ENCODE measurements at regions of chr16 and their contacts with region 1.

Region 1: GRCh38 chr16:70380861-70381603 is 34.3 kb downstream of the DDX19A start:
- DNase-seq: peak; percentile 97 to 98 (median 97)
- ATAC-seq: peak; percentile 96 to 98 (median 97)
- H3K4me3 ChIP-seq: peak overlapping the region; percentile 41 to 88 (median 68)
- H3K27ac ChIP-seq: peak overlapping the region; percentile 36 to 92 (median 84)
- H3K4me1 ChIP-seq: peaks cover 0 to 27% (median 15%) of the 10 kb centered on the region in 12 donors
- H3K27me3 ChIP-seq: no peaks in the 10 kb centered on the region
- CTCF ChIP-seq: peak in 10 of 12 donors; percentile 24 to 52 (median 36)
- POLR2A ChIP-seq: peak in 1 of 2 donors; percentile 71

Region 2: GRCh38 chr16:69166221-69166833 is 1214.7 kb before region 1 on chr16:
- intact Hi-C with region 1: no loop called
- DNase-seq: no peak
- ATAC-seq: peak in 1 of 4 donors; percentile 15
- H3K4me3 ChIP-seq: no peak overlapping the region
- H3K27ac ChIP-seq: no peak overlapping the region
- H3K4me1 ChIP-seq: peaks cover 0 to 19% (median 0%) of the 10 kb centered on the region in 12 donors
- H3K27me3 ChIP-seq: no peaks in the 10 kb centered on the region
- CTCF ChIP-seq: no peak
- POLR2A ChIP-seq: no peak

Region 3: GRCh38 chr16:70342016-70342415 is 39.0 kb before region 1 on chr16:
- intact Hi-C with region 1: no loop called
- DNase-seq: peak in 1 of 5 donors; percentile 29
- ATAC-seq: peak in 3 of 4 donors; percentile 54 to 65 (median 55)
- H3K4me3 ChIP-seq: no peak overlapping the region
- H3K27ac ChIP-seq: peak overlapping the region in 5 of 12 donors; percentile 20 to 59 (median 50)
- H3K4me1 ChIP-seq: peaks cover 0 to 16% (median 6%) of the 10 kb centered on the region in 12 donors
- H3K27me3 ChIP-seq: no peaks in the 10 kb centered on the region
- CTCF ChIP-seq: peak in 2 of 12 donors; percentile 10 to 12
- POLR2A ChIP-seq: no peak

Region 4: DNA sequence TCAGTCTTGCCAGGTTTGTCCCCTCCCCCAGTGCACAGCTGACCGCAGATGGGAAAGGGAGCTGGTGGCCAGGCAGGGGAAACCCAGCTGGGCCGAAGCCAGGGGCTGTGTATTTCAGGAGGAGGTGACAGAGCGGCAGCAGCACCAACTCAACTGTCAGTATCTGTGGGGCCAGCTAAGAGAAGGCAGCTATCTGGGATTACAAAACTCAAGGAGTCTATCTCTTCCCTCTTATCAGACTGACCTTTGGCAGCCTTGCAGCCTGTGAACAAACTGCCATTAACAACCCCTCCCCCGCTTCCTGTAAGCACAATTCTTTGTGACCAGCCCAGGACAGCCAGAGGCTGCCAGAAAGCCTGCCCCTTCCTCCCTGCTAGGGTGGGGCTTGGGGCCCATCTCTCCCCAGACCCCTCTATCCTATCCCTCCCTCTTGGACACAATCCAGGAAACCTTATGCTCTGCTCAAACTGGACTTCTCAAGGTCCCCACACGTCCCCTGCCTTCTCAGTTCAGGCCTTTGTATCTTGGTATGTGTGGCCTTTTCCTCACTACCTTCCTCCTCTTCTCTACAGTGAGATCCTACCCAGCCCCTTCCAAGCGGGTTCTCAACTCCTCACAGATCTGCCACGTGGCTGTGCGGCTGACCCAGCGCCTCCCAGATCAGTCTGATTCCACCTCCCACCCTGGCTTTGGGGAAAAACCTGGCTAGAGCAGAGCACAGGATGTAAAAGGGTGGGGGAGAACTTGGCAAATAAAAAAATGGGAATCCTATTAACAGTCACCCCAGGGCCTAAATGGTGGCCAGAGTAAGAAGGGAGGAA is 47.4 kb after region 1 on chr16:
- intact Hi-C with region 1: loop called in 2 of 10 experiments (anchors 5 kb)
- DNase-seq: peak; percentile 94 to 99 (median 95)
- ATAC-seq: peak; percentile 91 to 93 (median 91)
- H3K4me3 ChIP-seq: peak overlapping the region in 3 of 12 donors; percentile 10 to 19 (median 11)
- H3K27ac ChIP-seq: peak overlapping the region; percentile 53 to 94 (median 87)
- H3K4me1 ChIP-seq: peaks cover 36 to 77% (median 61%) of the 10 kb centered on the region in 12 donors
- H3K27me3 ChIP-seq: no peaks in the 10 kb centered on the region
- CTCF ChIP-seq: no peak
- POLR2A ChIP-seq: no peak

Region 5: DNA sequence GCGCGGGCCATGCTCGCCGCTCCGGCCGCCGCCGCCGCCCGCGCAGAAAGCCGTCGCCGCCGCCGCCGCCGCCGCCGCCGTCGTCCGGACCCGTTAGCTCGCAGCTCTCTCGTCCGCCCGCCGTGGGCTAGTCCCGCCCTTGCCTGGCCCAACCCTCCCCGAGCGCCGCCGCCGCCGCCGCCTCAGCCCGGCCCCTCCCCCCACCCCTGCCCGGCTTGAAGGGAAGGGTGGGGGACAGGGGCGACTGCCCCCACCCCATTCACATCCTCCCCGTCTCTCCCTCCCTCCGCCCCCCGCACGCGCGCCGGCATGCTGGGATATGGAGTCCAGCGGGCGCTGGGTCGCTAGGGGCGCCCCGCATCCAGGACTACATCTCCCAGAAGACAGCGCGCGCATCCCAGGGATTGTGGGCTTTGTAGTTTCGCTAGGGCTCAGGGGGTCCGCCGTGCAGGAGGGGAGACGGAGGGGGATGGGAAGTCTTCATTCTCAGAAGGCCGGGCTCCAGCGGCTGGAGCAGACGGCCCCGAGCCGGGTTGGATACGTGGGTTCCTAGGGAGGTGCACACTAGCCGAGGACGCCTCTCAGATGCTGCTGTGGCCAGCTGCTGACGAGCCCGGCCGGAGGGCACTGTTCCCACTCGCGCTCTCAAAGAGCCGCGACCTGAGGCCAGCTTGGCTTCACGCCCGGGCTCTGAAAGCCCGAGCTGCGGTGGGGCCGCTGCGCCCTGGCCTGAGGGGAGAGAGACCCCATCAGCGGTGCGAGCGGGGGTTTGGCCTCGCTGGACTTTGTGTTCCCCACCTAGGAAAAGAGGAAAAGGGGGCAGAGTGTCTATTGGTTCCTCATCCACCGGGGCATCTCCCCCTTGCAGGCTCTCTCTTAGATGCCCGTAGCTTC is 58.2 kb after region 1 on chr16 and contains the start of gene ST3GAL2:
- intact Hi-C with region 1: loop called in 7 of 10 experiments (anchors 2 to 5 kb)
- DNase-seq: peak; percentile 96 to 98 (median 96)
- ATAC-seq: peak; percentile 98 to 99 (median 98)
- H3K4me3 ChIP-seq: peak within 1 kb of the TSS; percentile 42 to 98 (median 80)
- H3K27ac ChIP-seq: peak within 1 kb of the TSS; percentile 50 to 85 (median 78)
- H3K4me1 ChIP-seq: peaks cover 0 to 48% (median 27%) of the 10 kb centered on the region in 12 donors
- H3K27me3 ChIP-seq: no peaks in the 10 kb centered on the region
- CTCF ChIP-seq: peak in 5 of 12 donors; percentile 6 to 41 (median 29)
- POLR2A ChIP-seq: no peak
- total RNA-seq, gene ST3GAL2: 16.7 to 44.6 (median 20.1) TPM

Region 6: DNA sequence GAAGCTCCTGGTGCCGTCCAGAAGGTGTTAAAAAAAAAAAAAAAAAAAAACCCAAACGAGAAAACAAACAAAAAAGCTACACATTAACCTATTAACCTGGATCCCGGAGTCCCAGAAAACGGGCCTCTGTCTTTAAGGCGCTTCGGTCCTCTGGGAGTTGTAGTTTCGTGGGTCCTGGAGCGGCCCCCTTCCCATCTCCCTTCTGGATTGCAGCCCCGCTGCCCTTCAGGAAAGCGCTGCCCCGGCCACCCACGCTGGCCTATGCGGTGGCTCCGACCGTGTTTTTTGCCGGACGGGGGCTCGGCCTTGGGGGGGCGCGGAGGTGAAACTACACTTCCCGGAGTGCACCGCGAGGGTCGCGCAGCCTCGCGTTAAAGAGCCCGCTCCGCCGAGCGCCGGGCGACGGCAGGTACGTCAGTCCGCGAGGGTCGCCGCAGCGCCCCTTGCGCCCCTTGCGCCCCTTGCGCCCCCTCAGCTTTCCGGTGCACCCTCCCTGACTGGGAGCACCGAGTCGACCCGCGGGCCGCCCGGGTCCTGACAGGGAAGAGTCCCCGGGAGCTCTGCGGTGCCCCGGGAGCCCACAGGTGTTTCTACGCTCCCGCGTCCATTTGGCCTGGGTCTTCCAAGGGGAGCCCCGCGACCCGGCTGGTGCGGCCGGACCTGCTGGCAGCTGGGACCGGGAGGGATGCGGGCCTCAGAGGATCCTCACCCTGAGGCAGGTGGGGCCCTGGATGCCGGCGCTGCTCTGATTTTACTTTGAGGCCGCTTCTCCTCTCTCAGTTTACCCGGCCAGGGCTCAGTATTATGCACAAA is 73.4 kb after region 1 on chr16 and contains the start of gene FCSK:
- intact Hi-C with region 1: loop called in 4 of 10 experiments (anchors 1 to 5 kb)
- DNase-seq: peak; percentile 61 to 85 (median 72)
- ATAC-seq: peak; percentile 59 to 95 (median 94)
- H3K4me3 ChIP-seq: peak within 1 kb of the TSS; percentile 76 to 99 (median 93)
- H3K27ac ChIP-seq: peak within 1 kb of the TSS; percentile 88 to 98 (median 94)
- H3K4me1 ChIP-seq: peaks cover 0 to 26% (median 12%) of the 10 kb centered on the region in 12 donors
- H3K27me3 ChIP-seq: no peaks in the 10 kb centered on the region
- CTCF ChIP-seq: peak in 3 of 12 donors; percentile 4 to 16 (median 7)
- POLR2A ChIP-seq: peak in 1 of 2 donors; percentile 36
- total RNA-seq, gene FCSK: 6.5 to 17.3 (median 8.2) TPM

Region 7: GRCh38 chr16:70467113-70468034 is 86.3 kb after region 1 on chr16:
- intact Hi-C with region 1: no loop called
- DNase-seq: peak in 1 of 5 donors; percentile 40
- ATAC-seq: no peak
- H3K4me3 ChIP-seq: no peak overlapping the region
- H3K27ac ChIP-seq: no peak overlapping the region
- H3K4me1 ChIP-seq: peaks cover 0 to 5% (median 0%) of the 10 kb centered on the region in 12 donors
- H3K27me3 ChIP-seq: no peaks in the 10 kb centered on the region
- CTCF ChIP-seq: no peak
- POLR2A ChIP-seq: no peak

Region 8: DNA sequence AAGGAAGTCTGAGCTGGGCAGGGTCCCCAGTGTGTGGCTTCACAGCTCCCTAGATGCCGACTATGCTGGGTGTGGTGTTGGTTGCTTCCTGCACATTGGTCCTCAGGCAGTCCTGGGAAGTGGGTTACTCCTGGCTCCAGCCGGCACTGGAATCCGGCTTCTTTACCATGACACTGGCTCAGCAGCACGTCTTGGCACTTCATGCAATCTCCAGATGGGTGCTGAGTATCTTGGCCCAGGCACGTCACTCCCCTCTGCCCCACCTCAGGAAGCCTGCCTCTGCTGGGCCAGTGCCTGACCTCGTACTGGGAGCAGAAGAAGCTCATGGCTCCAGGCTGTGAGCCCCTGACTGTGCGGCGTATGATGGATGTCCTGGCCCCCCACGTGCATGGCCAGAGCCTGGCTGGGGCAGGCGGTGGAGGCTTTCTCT is 97.9 kb after region 1 on chr16:
- intact Hi-C with region 1: loop called in 1 of 10 experiments (anchors 5 kb)
- DNase-seq: peak in 3 of 5 donors; percentile 53 to 66 (median 59)
- ATAC-seq: peak in 3 of 4 donors; percentile 45 to 60 (median 45)
- H3K4me3 ChIP-seq: no peak overlapping the region
- H3K27ac ChIP-seq: peak overlapping the region in 11 of 12 donors; percentile 30 to 73 (median 63)
- H3K4me1 ChIP-seq: peaks cover 0 to 32% (median 24%) of the 10 kb centered on the region in 12 donors
- H3K27me3 ChIP-seq: no peaks in the 10 kb centered on the region
- CTCF ChIP-seq: no peak
- POLR2A ChIP-seq: no peak

Region 9: DNA sequence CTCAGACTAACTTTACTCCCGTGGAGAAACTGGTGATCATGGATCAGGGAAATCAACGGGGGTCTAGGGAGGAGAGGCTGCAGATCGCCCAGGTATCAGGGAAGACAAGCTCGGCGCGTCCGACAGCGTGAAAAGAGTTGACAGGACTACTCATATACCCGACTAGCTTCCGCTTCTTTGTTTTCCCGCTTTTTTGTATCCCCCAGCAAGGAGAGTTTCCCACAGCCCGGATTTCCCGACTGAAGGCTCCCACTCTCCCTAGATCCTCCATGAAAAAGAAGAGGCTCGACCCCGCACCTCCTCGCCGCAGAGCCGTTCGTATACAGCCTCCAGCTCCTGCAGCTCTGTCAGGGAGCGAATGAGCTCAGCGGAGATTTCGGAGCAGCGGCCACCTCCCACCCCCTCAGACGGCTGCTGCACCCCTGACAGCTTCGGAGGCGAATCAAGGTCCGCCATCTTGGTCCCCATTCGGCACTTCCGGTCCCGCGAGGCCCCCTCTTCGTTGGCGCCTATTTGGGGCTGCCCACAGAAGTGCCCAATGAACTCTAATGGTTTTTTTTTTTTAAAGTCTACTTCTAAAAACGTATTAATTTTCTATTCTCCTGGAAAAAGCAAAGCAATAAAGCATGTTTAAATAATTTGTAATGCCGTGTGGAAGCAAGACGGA is 142.2 kb after region 1 on chr16 and contains the start of gene COG4:
- intact Hi-C with region 1: loop called in 2 of 10 experiments (anchors 1 to 5 kb)
- DNase-seq: peak; percentile 87 to 93 (median 90)
- ATAC-seq: peak; percentile 85 to 95 (median 92)
- H3K4me3 ChIP-seq: peak within 1 kb of the TSS; percentile 58 to 99 (median 84)
- H3K27ac ChIP-seq: peak within 1 kb of the TSS; percentile 67 to 94 (median 87)
- H3K4me1 ChIP-seq: peaks cover 3 to 61% (median 34%) of the 10 kb centered on the region in 12 donors
- H3K27me3 ChIP-seq: no peaks in the 10 kb centered on the region
- CTCF ChIP-seq: no peak
- POLR2A ChIP-seq: no peak
- total RNA-seq, gene COG4: 30.7 to 45.7 (median 41.7) TPM